ENCODE measurements at regions of chr4 and their contacts with region 1.

Region 1: GRCh38 chr4:120920666-120921065 is 1.9 kb downstream of the PRDM5 start:
- DNase-seq: no peak
- H3K4me3 ChIP-seq: no peak overlapping the region
- H3K27ac ChIP-seq: no peak overlapping the region
- H3K4me1 ChIP-seq: no peaks in the 10 kb centered on the region
- H3K27me3 ChIP-seq: no peaks in the 10 kb centered on the region
- CTCF ChIP-seq: no peak

Region 2: DNA sequence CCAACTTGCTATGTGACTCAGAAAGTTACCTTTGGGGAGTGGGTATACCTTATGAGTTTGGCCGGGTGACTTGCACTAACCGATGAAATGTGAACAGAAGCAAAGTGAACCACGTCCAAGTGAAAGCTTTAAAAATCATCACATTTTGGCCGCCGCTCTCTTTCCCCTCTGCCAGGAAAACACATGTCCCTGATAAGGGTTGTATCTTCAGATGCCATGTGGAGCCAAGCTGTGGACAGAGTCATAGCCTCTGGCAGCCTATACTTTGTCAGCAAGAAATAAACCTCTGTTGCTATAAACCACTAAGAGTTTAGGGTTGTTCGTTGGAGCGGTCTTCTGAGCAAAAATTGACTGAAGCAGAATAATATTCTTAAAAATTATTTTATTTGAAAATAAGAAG is 90.5 kb before region 1 on chr4:
- CTCF ChIA-PET with region 1: no interaction called
- POLR2A ChIA-PET with region 1: no interaction called
- intact Hi-C with region 1: no loop called
- DNase-seq: no peak
- H3K4me3 ChIP-seq: no peak overlapping the region
- H3K27ac ChIP-seq: no peak overlapping the region
- H3K4me1 ChIP-seq: no peaks in the 10 kb centered on the region
- H3K27me3 ChIP-seq: no peaks in the 10 kb centered on the region
- CTCF ChIP-seq: no peak

Region 3: DNA sequence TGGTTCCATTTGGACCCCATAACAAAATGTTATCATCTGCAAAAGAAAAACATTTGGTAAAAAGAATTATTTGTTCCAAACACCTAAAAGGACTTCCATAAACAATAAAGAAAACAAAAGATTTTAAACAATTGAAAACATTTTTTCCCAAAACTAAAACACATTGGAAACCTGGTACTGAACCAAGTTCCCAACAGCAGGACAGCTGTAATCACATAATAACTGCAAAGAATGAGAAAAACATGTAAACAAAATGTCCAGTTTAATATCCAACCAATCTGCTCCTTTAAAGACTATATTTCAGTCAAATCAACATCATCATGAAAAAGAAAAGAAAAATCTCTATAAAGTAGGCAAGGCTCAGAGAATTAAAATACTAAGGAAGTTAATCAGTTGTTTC is 34.5 kb before region 1 on chr4:
- CTCF ChIA-PET with region 1: no interaction called
- POLR2A ChIA-PET with region 1: interaction called, 15 read pairs
- intact Hi-C with region 1: no loop called
- DNase-seq: no peak
- H3K4me3 ChIP-seq: no peak overlapping the region
- H3K27ac ChIP-seq: no peak overlapping the region
- H3K4me1 ChIP-seq: no peaks in the 10 kb centered on the region
- H3K27me3 ChIP-seq: no peaks in the 10 kb centered on the region
- CTCF ChIP-seq: no peak

Measured in A673 (cell line).